Common myeloid progenitor, CD34-positive (primary cell): ENCODE measurements at regions of chr10 and their contacts with region 1.

Region 1: DNA sequence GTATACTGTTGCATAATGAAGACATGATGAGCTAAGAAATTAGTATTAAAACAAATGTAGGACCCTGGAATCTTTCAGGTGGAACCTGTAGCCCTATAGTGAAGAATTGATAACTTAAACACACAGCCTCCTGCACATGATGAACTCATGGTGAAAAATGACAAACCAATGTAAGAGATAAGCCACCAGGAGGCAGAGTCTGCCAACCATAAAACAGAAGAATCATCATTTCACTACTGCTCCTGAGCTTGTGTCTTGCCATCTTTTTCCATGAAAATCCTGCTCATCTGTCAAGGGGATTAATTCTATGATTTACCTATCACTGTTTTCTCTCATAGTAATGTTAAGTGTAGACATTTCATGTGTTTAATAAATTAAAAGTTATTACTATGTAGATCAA is 363.9 kb downstream of the MALRD1 start:
- DNase-seq: peak; percentile 36 to 61 (median 51)
- H3K4me3 ChIP-seq: no peak overlapping the region
- H3K27ac ChIP-seq: no peak overlapping the region
- H3K4me1 ChIP-seq: no peaks in the 10 kb centered on the region
- H3K27me3 ChIP-seq: no peaks in the 10 kb centered on the region

Region 2: GRCh38 chr10:19461588-19461987 is 49.1 kb after region 1 on chr10:
- CTCF ChIA-PET with region 1: no interaction called
- POLR2A ChIA-PET with region 1: no interaction called
- DNase-seq: no peak
- H3K4me3 ChIP-seq: no peak overlapping the region
- H3K27ac ChIP-seq: no peak overlapping the region
- H3K4me1 ChIP-seq: no peaks in the 10 kb centered on the region
- H3K27me3 ChIP-seq: no peaks in the 10 kb centered on the region

Region 3: DNA sequence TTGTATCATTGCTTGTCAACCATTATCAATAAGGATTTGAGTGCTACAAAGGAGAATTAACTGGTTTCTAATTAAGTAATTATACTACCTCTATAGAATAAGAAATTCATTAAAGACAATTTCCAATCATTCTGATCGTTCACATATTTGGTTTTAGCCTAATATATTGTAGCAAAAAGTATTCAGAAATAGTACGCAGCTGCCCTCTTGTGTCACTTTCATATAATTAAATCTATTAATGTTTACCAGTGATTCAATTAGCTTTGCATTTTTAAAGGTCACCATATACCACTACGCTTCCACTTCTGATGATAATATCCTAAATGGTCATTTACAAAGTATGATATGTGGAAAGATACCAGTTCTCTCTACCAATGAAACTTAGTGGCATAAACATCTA is 1356.3 kb after region 1 on chr10:
- CTCF ChIA-PET with region 1: interaction called, 20 read pairs
- POLR2A ChIA-PET with region 1: no interaction called
- DNase-seq: peak; percentile 41 to 69 (median 60)
- H3K4me3 ChIP-seq: no peak overlapping the region
- H3K27ac ChIP-seq: no peak overlapping the region
- H3K4me1 ChIP-seq: no peaks in the 10 kb centered on the region
- H3K27me3 ChIP-seq: no peaks in the 10 kb centered on the region